Calu3 (cell line): ENCODE measurements at regions of chrX and their contacts with region 1.

Region 1: GRCh38 chrX:38166478-38167083 is 54.1 kb downstream of the SRPX start:
- DNase-seq: peak; percentile 35
- H3K4me3 Mint-ChIP-seq: no peak overlapping the region
- H3K27ac Mint-ChIP-seq: no peak overlapping the region
- H3K4me1 Mint-ChIP-seq: no peaks in the 10 kb centered on the region
- H3K27me3 Mint-ChIP-seq: no peaks in the 10 kb centered on the region
- CTCF ChIP-seq: peak; percentile 33

Region 2: GRCh38 chrX:37946197-37946596 is 220.4 kb before region 1 on chrX:
- CTCF ChIA-PET with region 1: no interaction called
- intact Hi-C with region 1: no loop called
- DNase-seq: no peak
- H3K4me3 Mint-ChIP-seq: no peak overlapping the region
- H3K27ac Mint-ChIP-seq: no peak overlapping the region
- H3K4me1 Mint-ChIP-seq: no peaks in the 10 kb centered on the region
- H3K27me3 Mint-ChIP-seq: no peaks in the 10 kb centered on the region
- CTCF ChIP-seq: no peak

Region 3: DNA sequence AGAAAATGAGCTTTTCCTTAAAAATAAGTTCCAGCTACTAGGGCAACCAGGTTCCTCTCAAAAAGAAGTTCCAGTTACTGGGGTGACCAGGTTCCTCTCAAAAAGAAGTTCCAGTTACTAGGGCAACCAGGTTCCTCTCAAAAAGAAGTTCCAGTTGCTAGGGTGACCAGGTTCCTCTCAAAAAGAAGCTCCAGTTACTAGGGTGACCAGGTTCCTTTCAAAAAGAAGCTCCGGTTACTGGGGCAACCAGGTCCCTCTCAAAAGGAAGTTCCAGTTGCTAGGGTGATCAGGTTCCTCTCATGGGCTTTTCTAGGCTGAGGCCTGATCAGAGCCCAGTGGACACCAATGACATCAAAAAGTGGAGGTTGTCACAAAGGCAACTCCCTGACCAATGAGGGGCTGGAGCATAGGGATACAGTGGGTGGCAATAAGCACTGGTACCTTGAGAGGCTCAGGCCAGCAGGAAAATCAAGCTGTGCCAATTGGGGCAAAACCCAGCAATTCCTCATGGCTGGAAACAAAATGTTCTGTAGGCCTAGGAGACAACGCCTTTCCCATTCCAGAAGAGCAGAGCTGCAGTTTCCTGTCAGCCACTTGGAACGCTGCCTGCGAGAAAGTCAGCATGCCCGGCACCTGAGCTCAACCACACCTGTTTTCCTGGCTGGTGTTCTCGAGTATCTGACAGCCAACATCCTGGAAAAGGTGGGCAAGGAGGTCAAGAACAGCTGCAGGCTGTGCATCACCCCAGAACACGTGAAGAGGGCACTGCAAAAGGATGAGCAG is 172.6 kb before region 1 on chrX:
- CTCF ChIA-PET with region 1: no interaction called
- intact Hi-C with region 1: loop called (anchors 10 kb)
- DNase-seq: peak; percentile 8
- H3K4me3 Mint-ChIP-seq: no peak overlapping the region
- H3K27ac Mint-ChIP-seq: no peak overlapping the region
- H3K4me1 Mint-ChIP-seq: peaks cover 17% of the 10 kb centered on the region
- H3K27me3 Mint-ChIP-seq: no peaks in the 10 kb centered on the region
- CTCF ChIP-seq: no peak